ENCODE measurements at regions of chr15 and their contacts with region 1.

Region 1: GRCh38 chr15:32029862-32030781 is at the start of gene CHRNA7:
- DNase-seq: peak; percentile 69 to 76
- H3K4me3 ChIP-seq: peak within 1 kb of the TSS; percentile 42
- H3K4me3 Mint-ChIP-seq: peak within 1 kb of the TSS; percentile 66
- H3K27ac Mint-ChIP-seq: no peak within 1 kb of the TSS
- H3K4me1 ChIP-seq: peaks cover 11% of the 10 kb centered on the region; the same call in 1 of the 2 replicates
- H3K4me1 Mint-ChIP-seq: no peaks in the 10 kb centered on the region
- H3K27me3 ChIP-seq: peaks cover 7% of the 10 kb centered on the region
- H3K27me3 Mint-ChIP-seq: peaks cover 36% of the 10 kb centered on the region
- CTCF ChIP-seq: peak in 1 of 2 experiments; percentile 36
- total RNA-seq, gene CHRNA7: 0.11 and 0.21 TPM in 2 replicates

Region 2: DNA sequence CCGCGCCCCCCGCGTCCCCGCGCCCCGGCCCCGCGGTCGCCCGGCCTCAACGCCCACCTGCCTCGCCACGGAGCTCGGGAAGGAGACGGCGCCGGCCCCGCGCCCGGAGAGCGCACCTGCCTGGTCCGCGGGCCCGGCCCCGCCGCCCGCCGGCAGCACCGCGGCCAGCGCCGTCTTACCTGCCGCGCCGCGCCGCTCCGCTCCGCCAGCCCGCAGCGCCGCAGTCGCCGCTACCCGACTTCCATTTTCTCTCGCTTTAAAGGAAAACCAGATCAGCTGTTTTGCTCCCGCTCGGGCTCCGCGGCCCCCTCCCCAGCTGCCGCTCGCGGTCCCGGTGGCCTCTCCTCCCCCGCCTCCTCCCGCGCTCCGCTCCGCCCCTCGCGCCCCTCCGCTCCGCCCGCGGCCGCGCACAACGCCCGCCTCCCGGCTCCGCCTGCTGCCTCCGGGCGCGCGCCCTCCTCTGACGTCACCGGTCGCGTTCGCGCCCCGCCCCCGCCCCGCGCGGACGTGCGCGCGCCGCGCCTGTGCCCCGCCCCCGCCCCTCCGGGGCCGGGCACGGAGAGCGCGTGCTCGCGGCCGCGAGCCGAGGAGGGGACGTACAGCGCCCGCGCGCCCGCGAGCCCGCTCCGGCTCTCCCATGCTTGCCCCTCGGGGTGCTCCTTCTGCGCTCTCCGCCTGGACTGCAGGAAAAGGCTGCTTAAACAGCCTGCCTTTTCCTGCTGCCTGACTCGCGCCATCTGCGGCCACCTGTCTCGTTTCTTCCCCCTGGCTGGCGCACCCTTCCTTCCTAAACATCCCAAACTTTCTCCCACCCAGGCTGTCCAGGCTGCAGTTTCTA is 159.6 kb before region 1 on chr15:
- CTCF ChIA-PET with region 1: no interaction called
- POLR2A ChIA-PET with region 1: no interaction called
- intact Hi-C with region 1: loop called (anchors 5 kb)
- DNase-seq: peak; percentile 79 to 91
- H3K4me3 ChIP-seq: peak within 1 kb of the TSS; percentile 63
- H3K4me3 Mint-ChIP-seq: peak within 1 kb of the TSS; percentile 97
- H3K27ac Mint-ChIP-seq: peak within 1 kb of the TSS; percentile 74
- H3K4me1 ChIP-seq: no peaks in the 10 kb centered on the region; the same call in 1 of the 2 replicates
- H3K4me1 Mint-ChIP-seq: peaks cover 6% of the 10 kb centered on the region
- H3K27me3 ChIP-seq: no peaks in the 10 kb centered on the region
- H3K27me3 Mint-ChIP-seq: peaks cover 18% of the 10 kb centered on the region
- CTCF ChIP-seq: no peak

Region 3: GRCh38 chr15:32003558-32003957 is 26.6 kb before region 1 on chr15:
- CTCF ChIA-PET with region 1: no interaction called
- POLR2A ChIA-PET with region 1: no interaction called
- intact Hi-C with region 1: loop called (anchors 1 kb)
- DNase-seq: no peak
- H3K4me3 ChIP-seq: no peak overlapping the region
- H3K4me3 Mint-ChIP-seq: no peak overlapping the region
- H3K27ac Mint-ChIP-seq: no peak overlapping the region
- H3K4me1 ChIP-seq: no peaks in the 10 kb centered on the region
- H3K4me1 Mint-ChIP-seq: no peaks in the 10 kb centered on the region
- H3K27me3 ChIP-seq: no peaks in the 10 kb centered on the region
- H3K27me3 Mint-ChIP-seq: peaks cover 14% of the 10 kb centered on the region
- CTCF ChIP-seq: no peak